ENCODE measurements at regions of chr13 and their contacts with region 1.

Region 1: GRCh38 chr13:25429466-25430249 is 57.9 kb downstream of the ATP8A2 start:
- DNase-seq: no peak
- ATAC-seq: no peak
- H3K4me3 ChIP-seq: no peak overlapping the region
- H3K27ac ChIP-seq: no peak overlapping the region
- H3K4me1 ChIP-seq: no peaks in the 10 kb centered on the region
- H3K27me3 ChIP-seq: no peaks in the 10 kb centered on the region
- CTCF ChIP-seq: no peak
- POLR2A ChIP-seq: no peak
- RAD21 ChIP-seq: no peak

Region 2: GRCh38 chr13:25473864-25474263 is 44.2 kb after region 1 on chr13:
- CTCF ChIA-PET with region 1: no interaction called
- POLR2A ChIA-PET with region 1: no interaction called
- dilution Hi-C with region 1: no loop called
- in situ Hi-C with region 1: no loop called
- intact Hi-C with region 1: loop called (anchors 1 kb)
- DNase-seq: no peak
- ATAC-seq: no peak
- H3K4me3 ChIP-seq: no peak overlapping the region
- H3K27ac ChIP-seq: no peak overlapping the region
- H3K4me1 ChIP-seq: no peaks in the 10 kb centered on the region
- H3K27me3 ChIP-seq: peaks cover 4% of the 10 kb centered on the region
- CTCF ChIP-seq: no peak
- POLR2A ChIP-seq: no peak
- RAD21 ChIP-seq: no peak

Measured in IMR-90 (cell line).